Dorsolateral prefrontal cortex (tissue), 120 donors: ENCODE measurements at regions of chr1 and their contacts with region 1.

Region 1: DNA sequence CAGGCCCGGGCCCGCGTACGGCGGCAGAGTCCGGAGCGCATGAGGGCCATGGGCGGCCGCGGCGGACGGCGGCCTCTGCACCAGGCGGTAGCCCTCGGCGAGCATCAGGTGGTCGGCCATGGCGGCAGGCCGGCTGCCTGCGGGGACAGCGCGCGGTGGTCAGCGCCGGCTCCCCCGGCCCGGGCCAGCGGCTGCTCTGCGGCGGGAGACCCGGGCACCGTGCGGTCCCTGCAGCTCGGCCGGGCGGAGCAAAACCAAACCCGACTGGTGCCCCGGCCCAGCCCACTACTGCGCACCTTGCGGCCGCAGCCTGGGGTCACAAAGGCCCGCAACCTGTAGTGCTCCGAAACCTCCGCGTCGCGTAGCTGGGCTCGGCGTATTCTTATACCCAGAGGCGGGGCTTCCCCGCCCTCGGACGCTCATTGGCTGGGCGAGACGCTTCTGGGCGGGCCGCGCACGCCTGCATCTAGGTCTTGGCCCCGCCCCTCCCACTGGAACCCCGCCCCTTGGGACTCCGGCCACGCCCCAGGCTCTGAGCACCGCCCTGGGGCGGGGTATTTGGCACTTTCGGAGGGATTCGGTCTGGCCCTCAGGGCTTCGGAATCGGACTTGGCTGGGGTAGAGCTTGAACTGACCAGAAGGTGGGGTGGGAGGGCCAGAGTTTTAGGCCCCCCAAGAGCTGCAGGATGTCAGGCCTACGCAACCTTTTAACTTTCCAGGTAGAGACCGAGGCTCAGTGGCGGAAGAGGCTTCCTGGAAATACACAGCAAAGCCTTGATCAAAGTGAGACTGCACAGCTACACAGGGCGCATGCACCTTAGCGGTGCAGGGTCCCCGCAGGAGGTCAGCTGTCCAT is at the start of gene CITED4:
- DNase-seq: peak; percentile 92 to 96 (median 93)
- H3K4me3 ChIP-seq: peak within 1 kb of the TSS; percentile 46 to 92 (median 73)
- H3K27ac ChIP-seq: peak within 1 kb of the TSS in 34 of 59 donors; percentile 5 to 80 (median 52)
- H3K27me3 ChIP-seq: no peaks in the 10 kb centered on the region
- CTCF ChIP-seq: peak in 30 of 56 donors; percentile 6 to 50 (median 30)
- total RNA-seq, gene CITED4: 6.5 to 19.9 (median 12.1) TPM

Region 2: GRCh38 chr1:40919475-40920011 is 57.3 kb after region 1 on chr1:
- intact Hi-C with region 1: loop called in 1 of 2 experiments (anchors 5 kb)
- DNase-seq: peak; percentile 14 to 90 (median 82)
- H3K4me3 ChIP-seq: peak overlapping the region in 2 of 59 donors; percentile 12 to 13
- H3K27ac ChIP-seq: peak overlapping the region in 58 of 59 donors; percentile 53 to 96 (median 87)
- H3K27me3 ChIP-seq: no peaks in the 10 kb centered on the region
- CTCF ChIP-seq: peak in 2 of 56 donors; percentile 7 to 15